ENCODE measurements at regions of chr2 and their contacts with region 1.

Region 1: GRCh38 chr2:27356382-27357181 is at the start of gene GTF3C2:
- DNase-seq: peak; percentile 76 to 94 (median 92)
- ATAC-seq: peak; percentile 85
- H3K4me3 ChIP-seq: peak within 1 kb of the TSS; percentile 96
- H3K4me3 Mint-ChIP-seq: peak within 1 kb of the TSS; percentile 95 to 100 (median 98)
- H3K27ac ChIP-seq: peak within 1 kb of the TSS; percentile 91
- H3K27ac Mint-ChIP-seq: peak within 1 kb of the TSS; percentile 96 to 100 (median 99)
- H3K4me1 ChIP-seq: peaks cover 24 to 34% of the 10 kb centered on the region in 2 donors
- H3K4me1 Mint-ChIP-seq: peaks cover 38 to 63% (median 56%) of the 10 kb centered on the region in 7 donors
- H3K27me3 ChIP-seq: no peaks in the 10 kb centered on the region
- H3K27me3 Mint-ChIP-seq: no peaks in the 10 kb centered on the region
- total RNA-seq, gene GTF3C2: 68.0 to 106 (median 78.3) TPM

Region 2: GRCh38 chr2:27380626-27381545 is 24.3 kb after region 1 on chr2 and contains the start of gene ZNF513:
- CTCF ChIA-PET with region 1: no interaction called
- POLR2A ChIA-PET with region 1: interaction called, 7 read pairs
- intact Hi-C with region 1: loop called in 1 of 2 experiments (anchors 1 kb)
- DNase-seq: peak; percentile 71 to 88 (median 81)
- ATAC-seq: peak; percentile 97
- H3K4me3 ChIP-seq: peak within 1 kb of the TSS; percentile 67
- H3K4me3 Mint-ChIP-seq: peak within 1 kb of the TSS; percentile 85 to 94 (median 90)
- H3K27ac ChIP-seq: peak within 1 kb of the TSS; percentile 85
- H3K27ac Mint-ChIP-seq: peak within 1 kb of the TSS; percentile 88 to 97 (median 94)
- H3K4me1 ChIP-seq: peaks cover 9 to 10% of the 10 kb centered on the region in 2 donors
- H3K4me1 Mint-ChIP-seq: peaks cover 18 to 33% (median 30%) of the 10 kb centered on the region in 7 donors
- H3K27me3 ChIP-seq: no peaks in the 10 kb centered on the region
- H3K27me3 Mint-ChIP-seq: no peaks in the 10 kb centered on the region
- total RNA-seq, gene ZNF513: 15.6 to 23.2 (median 19.2) TPM